ENCODE measurements at regions of chr4 and their contacts with region 1.

Region 1: DNA sequence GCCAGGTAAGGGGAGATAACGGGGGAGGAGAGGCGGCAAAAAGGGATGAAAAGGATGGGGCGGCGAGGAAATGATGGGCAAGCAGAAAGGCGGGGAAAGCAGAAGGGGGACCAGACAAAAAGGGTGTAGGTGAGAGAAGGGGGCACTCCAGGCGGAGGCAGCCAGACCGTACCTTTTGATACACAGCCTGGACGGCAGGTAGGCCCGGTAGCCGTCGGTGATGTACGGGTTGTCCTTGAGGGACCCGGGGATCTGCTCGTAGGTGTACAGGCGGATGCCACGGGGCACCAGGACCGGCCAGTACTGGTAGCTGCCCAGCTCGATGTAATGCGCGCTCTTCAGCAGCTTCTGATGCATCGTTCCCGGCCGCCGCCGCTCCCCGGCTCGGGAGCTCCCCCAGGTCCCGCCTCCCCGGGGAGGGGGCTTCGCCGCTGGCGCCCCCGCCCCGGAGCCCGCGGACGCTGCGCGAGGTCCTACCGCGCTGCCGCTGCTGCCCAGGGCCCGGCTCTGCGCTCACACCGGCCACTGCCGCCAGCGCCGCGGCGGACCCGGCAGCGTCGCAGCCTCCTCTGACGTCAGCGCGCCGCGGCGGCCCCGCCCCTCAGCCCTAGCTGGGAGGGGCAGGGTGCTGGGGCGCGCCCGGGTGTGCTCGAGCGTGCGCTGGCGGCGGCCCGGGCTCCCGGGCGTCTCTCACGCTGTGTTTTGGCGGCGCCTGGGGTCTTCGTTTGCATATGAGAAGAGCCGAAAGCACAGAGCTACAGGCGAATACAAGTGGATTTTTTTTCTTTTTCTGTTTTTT is at the start of gene PAQR3:
- DNase-seq: peak; percentile 92
- H3K4me3 ChIP-seq: peak within 1 kb of the TSS; percentile 100
- H3K27ac ChIP-seq: peak within 1 kb of the TSS; percentile 30
- H3K4me1 ChIP-seq: peaks cover 19% of the 10 kb centered on the region
- CTCF ChIP-seq: 0 out of 2 replicates have a peak, but pooled peaks have one; percentile 30
- total RNA-seq, gene PAQR3: 18.5 and 21.6 TPM in 2 replicates

Region 2: GRCh38 chr4:78880874-78881492 is 58.1 kb before region 1 on chr4:
- CTCF ChIA-PET with region 1: no interaction called
- POLR2A ChIA-PET with region 1: no interaction called
- intact Hi-C with region 1: no loop called
- DNase-seq: peak; percentile 27
- H3K4me3 ChIP-seq: no peak overlapping the region
- H3K27ac ChIP-seq: peak overlapping the region; percentile 42
- H3K4me1 ChIP-seq: peaks cover 13% of the 10 kb centered on the region
- CTCF ChIP-seq: no peak

Region 3: DNA sequence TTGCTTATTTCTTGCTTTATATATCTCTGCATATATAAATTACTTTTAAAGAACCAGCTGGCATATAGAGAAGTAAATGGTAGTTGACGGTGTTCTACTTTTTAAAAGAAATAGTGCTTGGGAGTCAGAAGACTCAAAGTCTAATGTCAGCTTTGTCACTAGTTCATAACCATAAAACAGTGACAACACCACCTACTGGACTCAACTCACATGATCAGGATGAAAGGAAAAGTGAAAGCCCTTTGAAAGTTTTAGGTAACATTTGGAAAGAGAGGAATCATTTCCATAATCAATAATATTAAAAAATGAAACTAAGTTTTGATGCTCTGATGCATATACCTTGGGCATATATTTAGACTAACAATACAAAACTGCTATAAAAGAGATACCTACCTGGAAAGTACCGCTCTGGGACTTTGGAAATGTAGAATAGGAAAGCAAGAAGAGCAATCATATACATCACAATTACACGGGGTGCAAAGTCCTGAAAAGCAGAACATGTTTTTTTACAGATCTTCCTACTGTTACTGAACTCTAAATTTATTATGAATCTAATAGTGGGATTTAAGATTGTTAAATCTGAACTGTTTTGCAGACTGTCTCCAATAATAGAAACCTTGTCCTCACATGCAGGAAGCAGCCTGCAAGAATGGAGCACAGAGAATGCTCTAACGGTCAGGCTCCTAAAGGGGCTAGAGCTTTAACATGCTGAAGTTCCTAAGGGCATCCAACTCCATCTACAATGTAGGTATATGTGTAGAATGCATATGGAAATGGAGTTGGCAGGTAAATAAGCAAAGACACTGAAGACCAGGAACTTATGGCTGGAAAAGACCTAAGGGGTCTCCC is 15.4 kb before region 1 on chr4:
- CTCF ChIA-PET with region 1: interaction called, 3 read pairs
- POLR2A ChIA-PET with region 1: interaction called, 10 read pairs
- intact Hi-C with region 1: no loop called
- DNase-seq: peak; percentile 15
- H3K4me3 ChIP-seq: no peak overlapping the region
- H3K27ac ChIP-seq: no peak overlapping the region
- H3K4me1 ChIP-seq: no peaks in the 10 kb centered on the region
- CTCF ChIP-seq: peak; percentile 64

Region 4: DNA sequence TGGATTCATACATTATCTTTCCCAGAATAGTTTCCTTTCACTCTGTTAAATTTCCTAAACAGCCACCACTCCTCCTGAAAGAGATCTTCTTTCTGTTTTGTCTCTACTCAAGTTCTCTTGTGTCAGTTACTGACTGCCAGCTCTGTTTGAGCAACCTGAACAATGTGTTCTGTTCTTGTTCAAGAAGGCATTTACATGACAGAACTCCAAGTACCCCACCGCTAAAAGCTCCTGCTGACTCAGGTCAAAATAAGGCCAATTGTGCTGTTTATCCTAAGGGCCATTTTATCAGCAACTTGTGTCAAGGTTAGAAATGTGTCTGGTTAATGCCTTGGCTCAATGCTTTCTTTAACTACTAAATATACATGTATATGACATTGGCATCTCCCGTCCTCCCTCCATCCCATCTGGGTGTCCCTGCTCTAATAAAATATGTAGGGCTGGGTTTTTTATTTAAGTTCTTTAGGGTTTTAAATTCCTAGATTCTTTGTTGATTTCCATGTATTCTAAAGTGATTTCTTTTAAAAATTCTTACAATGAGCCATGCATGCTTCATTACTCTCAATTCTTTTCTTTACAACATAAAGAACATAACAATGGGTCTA is 144.4 kb after region 1 on chr4:
- CTCF ChIA-PET with region 1: interaction called, 11 read pairs
- POLR2A ChIA-PET with region 1: no interaction called
- intact Hi-C with region 1: no loop called
- DNase-seq: no peak
- H3K4me3 ChIP-seq: no peak overlapping the region
- H3K27ac ChIP-seq: no peak overlapping the region
- H3K4me1 ChIP-seq: no peaks in the 10 kb centered on the region
- CTCF ChIP-seq: no peak

Region 5: DNA sequence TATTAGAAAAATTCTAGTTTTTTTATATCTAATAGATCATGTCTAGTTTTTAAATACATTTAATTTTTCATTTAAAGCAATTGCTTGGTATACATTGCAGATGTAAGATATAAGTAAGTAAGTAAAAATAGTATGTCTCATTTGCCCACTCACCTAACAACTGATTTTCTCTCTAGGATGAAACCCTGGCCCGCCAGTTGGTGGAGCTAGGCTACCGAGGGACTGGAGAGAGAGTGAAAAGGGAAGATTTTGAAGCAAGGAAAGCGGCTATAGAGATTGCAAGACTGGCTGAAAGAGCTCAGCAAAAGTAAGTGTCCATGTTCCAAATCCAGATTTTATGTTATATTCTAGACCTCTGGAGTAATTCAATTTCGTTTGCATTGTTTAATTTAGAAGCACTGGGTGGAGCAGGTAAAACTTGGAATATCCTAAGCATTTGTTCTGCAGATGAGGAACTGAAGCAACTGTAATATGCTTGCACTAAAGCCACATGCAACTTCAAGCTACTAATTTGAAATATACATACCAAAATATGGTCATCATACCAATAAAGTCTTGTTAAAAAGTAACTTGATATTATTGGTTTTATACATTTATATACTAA is 1423.6 kb after region 1 on chr4:
- CTCF ChIA-PET with region 1: no interaction called
- POLR2A ChIA-PET with region 1: no interaction called
- intact Hi-C with region 1: no loop called
- DNase-seq: peak; percentile 86
- H3K4me3 ChIP-seq: peak overlapping the region; percentile 28
- H3K27ac ChIP-seq: peak overlapping the region; percentile 51
- H3K4me1 ChIP-seq: peaks cover 40% of the 10 kb centered on the region
- CTCF ChIP-seq: peak; percentile 98

Measured in OCI-LY7 (cell line).